ENCODE measurements at regions of chr4 and their contacts with region 1.

Region 1: DNA sequence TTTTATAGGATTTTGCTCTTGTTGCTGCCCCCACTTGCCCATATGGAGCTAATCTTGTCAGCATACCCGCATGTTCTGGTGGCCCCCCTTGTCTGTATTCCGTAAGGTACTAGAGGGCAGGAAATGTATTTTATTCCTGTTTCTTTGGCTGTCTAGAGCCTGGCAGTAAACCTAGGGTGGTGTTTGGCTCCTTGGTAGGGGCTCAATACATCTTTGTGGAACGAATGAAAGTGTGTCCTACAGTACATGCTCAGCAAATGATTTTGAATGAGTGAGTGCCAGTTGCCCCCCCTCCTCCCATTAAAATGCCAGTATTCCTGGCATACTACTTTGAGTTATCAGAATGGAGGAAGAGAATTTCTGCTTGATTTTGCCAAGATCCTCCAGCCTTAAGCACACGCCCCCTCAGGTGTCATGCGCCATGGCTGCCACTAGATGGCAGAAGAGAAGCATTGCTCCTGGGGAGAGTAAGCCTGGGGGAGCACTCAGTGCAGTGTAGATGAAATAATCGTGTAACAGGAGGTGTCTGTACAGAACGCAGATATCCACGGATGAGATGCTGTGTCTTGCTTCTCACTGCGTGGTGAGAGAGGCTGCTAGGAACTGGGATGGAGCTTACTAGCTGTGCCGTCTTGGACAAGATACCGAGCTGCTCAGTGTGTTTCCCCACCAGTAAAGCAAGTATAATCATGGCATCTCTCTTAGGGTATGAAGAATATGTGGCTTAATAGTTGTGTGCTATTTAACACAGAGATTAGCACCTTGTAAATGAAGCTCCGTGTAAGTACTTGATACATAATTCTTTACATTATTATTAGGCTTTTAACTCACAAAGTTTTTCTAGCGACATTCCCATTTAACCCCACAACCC is 17.2 kb upstream of the RNF212 start:
- DNase-seq: peak; percentile 60 to 88 (median 74)
- ATAC-seq: peak; percentile 100
- H3K4me3 ChIP-seq: no peak overlapping the region
- H3K4me3 Mint-ChIP-seq: no peak overlapping the region
- H3K27ac ChIP-seq: no peak overlapping the region
- H3K27ac Mint-ChIP-seq: no peak overlapping the region
- H3K4me1 ChIP-seq: no peaks in the 10 kb centered on the region
- H3K4me1 Mint-ChIP-seq: peaks cover 4% of the 10 kb centered on the region
- H3K27me3 ChIP-seq: no peaks in the 10 kb centered on the region
- H3K27me3 Mint-ChIP-seq: peaks cover 2% of the 10 kb centered on the region
- CTCF ChIP-seq: peak; percentile 99

Region 2: GRCh38 chr4:1092026-1092982 is 38.2 kb before region 1 on chr4:
- CTCF ChIA-PET with region 1: no interaction called
- POLR2A ChIA-PET with region 1: no interaction called
- intact Hi-C with region 1: no loop called
- DNase-seq: no peak
- ATAC-seq: no peak
- H3K4me3 ChIP-seq: no peak overlapping the region
- H3K4me3 Mint-ChIP-seq: no peak overlapping the region
- H3K27ac ChIP-seq: no peak overlapping the region
- H3K27ac Mint-ChIP-seq: no peak overlapping the region
- H3K4me1 ChIP-seq: no peaks in the 10 kb centered on the region
- H3K4me1 Mint-ChIP-seq: no peaks in the 10 kb centered on the region
- H3K27me3 ChIP-seq: no peaks in the 10 kb centered on the region
- H3K27me3 Mint-ChIP-seq: peaks cover 3% of the 10 kb centered on the region
- CTCF ChIP-seq: no peak

Region 3: DNA sequence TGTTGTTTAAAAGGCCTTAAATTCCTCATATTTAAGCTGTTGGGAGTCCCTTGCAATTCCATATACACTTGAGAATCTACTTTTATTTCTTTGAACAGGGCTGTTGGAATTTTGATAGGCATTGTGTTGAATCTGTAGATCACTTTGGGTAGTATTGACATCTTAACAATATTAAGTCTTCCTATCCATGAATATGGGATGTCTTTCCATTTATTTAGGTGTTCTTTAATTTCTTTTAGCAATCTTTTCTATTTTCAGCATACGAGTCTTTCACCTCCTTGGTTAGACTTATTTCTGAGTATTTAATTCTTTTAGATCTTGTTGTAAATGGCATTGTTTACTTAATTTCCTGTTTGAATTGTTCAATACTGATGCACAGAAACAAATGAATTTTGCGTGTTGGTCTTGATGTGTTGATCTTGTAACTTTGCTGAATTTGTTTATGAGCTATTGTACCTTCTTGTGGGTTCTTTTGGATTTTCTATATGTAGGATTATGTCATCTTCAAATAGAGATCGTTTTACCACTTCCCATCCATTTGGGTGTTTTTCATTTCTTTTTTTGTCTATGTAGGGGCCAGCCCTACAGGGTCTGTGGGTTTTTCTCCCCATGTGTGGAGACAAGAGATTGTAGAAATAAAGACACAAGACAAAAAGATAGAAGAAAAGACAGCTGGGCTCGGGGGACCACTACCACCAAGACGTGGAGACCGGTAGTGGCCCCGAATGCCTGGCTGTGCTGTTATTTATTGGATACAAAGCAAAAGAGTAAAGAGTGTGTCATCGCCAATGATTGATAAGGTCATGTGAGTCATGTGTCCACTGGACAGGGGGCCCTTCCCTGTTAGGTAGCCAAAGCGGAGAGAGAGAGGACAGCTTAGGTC is 136.6 kb after region 1 on chr4:
- CTCF ChIA-PET with region 1: interaction called, 53 read pairs
- POLR2A ChIA-PET with region 1: no interaction called
- intact Hi-C with region 1: loop called (anchors 1 kb)
- DNase-seq: peak in 2 of 9 experiments; percentile 23 to 64
- ATAC-seq: peak; percentile 78
- H3K4me3 ChIP-seq: peak overlapping the region in 1 of 2 experiments; percentile 46
- H3K4me3 Mint-ChIP-seq: peak overlapping the region; percentile 76
- H3K27ac ChIP-seq: peak overlapping the region; percentile 57 to 73
- H3K27ac Mint-ChIP-seq: peak overlapping the region; percentile 93
- H3K4me1 ChIP-seq: peaks cover 12% of the 10 kb centered on the region
- H3K4me1 Mint-ChIP-seq: peaks cover 20% of the 10 kb centered on the region
- H3K27me3 ChIP-seq: no peaks in the 10 kb centered on the region
- H3K27me3 Mint-ChIP-seq: no peaks in the 10 kb centered on the region
- CTCF ChIP-seq: no peak

Region 4: DNA sequence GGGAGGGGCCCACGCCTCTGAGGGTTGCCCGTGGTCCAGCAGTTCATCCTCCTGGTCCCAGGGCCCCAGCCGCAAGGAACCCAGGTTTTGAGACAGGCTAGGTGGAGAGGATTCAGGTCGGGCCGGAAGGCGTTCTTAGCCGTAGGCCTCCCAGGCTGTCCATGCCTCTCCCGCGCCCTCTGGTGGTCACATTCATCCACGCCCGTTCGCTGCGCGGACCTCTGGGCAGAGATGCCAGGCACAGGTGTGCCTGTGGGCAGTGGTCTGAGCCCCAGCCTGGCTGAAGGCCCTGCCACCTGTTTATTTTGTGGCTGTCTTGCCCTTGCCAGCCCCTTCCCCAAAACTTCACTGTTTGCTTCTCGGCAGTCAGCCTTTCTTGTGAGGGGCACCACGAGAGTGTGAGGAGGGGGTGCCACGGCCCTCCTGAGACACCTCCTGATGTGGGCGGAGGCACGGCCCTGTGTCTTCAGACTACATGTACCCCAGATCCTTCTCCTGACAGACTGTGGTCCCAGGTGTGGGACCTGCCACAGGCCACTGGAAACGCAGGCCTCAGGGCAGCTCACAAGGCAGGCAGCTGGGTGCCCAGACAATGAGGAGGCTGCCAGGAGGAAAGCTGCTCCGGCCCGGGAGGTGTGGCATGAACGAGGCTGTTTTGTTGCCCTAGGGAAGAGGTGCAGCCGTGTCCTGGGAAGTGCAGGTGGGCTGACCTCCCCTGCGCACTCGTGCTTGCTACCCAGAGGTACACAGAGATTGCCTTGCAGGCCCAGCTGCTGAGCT is 221.5 kb after region 1 on chr4:
- CTCF ChIA-PET with region 1: interaction called, 52 read pairs
- POLR2A ChIA-PET with region 1: no interaction called
- intact Hi-C with region 1: loop called (anchors 1 kb)
- DNase-seq: peak; percentile 78 to 96 (median 90)
- ATAC-seq: peak; percentile 30
- H3K4me3 ChIP-seq: no peak overlapping the region
- H3K4me3 Mint-ChIP-seq: no peak overlapping the region
- H3K27ac ChIP-seq: peak overlapping the region in 1 of 2 experiments; percentile 28
- H3K27ac Mint-ChIP-seq: peak overlapping the region; percentile 72
- H3K4me1 ChIP-seq: peaks cover 21% of the 10 kb centered on the region
- H3K4me1 Mint-ChIP-seq: peaks cover 33% of the 10 kb centered on the region
- H3K27me3 ChIP-seq: no peaks in the 10 kb centered on the region
- H3K27me3 Mint-ChIP-seq: no peaks in the 10 kb centered on the region
- CTCF ChIP-seq: peak; percentile 85

Region 5: DNA sequence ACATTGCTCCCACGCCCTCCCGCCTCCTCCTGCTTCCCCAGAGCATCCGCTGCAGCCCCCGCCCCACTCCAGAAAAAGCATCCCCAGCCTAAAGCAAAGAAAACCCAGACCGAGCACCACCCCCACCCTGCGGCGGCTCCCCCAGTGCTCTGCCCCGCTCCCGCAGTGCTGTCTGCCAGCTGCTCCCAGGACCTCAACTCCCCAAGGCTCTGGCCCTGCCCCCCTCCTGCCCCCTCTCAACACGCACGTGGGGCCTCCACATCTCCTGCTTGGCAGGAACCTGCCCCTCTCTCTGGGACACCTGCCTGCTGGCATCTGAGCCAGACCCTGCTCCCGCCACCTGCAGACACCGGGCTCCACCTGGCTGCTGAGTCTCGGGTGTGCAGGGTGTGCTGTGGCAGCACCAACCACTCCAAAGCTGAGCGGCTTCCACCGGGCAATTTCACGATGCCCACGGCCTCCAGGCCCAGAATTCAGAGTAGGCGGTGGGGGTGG is 474.2 kb after region 1 on chr4:
- CTCF ChIA-PET with region 1: no interaction called
- POLR2A ChIA-PET with region 1: no interaction called
- intact Hi-C with region 1: loop called (anchors 1 to 10 kb)
- DNase-seq: peak in 7 of 9 experiments; percentile 19 to 77 (median 51)
- ATAC-seq: peak; percentile 79
- H3K4me3 ChIP-seq: peak overlapping the region; percentile 24 to 37
- H3K4me3 Mint-ChIP-seq: peak overlapping the region; percentile 79
- H3K27ac ChIP-seq: peak overlapping the region in 1 of 2 experiments; percentile 41
- H3K27ac Mint-ChIP-seq: peak overlapping the region; percentile 92
- H3K4me1 ChIP-seq: peaks cover 29% of the 10 kb centered on the region
- H3K4me1 Mint-ChIP-seq: peaks cover 27% of the 10 kb centered on the region
- H3K27me3 ChIP-seq: no peaks in the 10 kb centered on the region
- H3K27me3 Mint-ChIP-seq: no peaks in the 10 kb centered on the region
- CTCF ChIP-seq: peak; percentile 31

Region 6: GRCh38 chr4:1644891-1645657 is 514.5 kb after region 1 on chr4:
- CTCF ChIA-PET with region 1: no interaction called
- POLR2A ChIA-PET with region 1: no interaction called
- intact Hi-C with region 1: no loop called
- DNase-seq: no peak
- ATAC-seq: no peak
- H3K4me3 ChIP-seq: no peak overlapping the region
- H3K4me3 Mint-ChIP-seq: no peak overlapping the region
- H3K27ac ChIP-seq: no peak overlapping the region
- H3K27ac Mint-ChIP-seq: no peak overlapping the region
- H3K4me1 ChIP-seq: no peaks in the 10 kb centered on the region
- H3K4me1 Mint-ChIP-seq: peaks cover 4% of the 10 kb centered on the region
- H3K27me3 ChIP-seq: no peaks in the 10 kb centered on the region
- H3K27me3 Mint-ChIP-seq: no peaks in the 10 kb centered on the region
- CTCF ChIP-seq: no peak

Measured in CD8-positive, alpha-beta T cell (primary cell).